ENCODE measurements at regions of chr5 and their contacts with region 1.

Region 1: DNA sequence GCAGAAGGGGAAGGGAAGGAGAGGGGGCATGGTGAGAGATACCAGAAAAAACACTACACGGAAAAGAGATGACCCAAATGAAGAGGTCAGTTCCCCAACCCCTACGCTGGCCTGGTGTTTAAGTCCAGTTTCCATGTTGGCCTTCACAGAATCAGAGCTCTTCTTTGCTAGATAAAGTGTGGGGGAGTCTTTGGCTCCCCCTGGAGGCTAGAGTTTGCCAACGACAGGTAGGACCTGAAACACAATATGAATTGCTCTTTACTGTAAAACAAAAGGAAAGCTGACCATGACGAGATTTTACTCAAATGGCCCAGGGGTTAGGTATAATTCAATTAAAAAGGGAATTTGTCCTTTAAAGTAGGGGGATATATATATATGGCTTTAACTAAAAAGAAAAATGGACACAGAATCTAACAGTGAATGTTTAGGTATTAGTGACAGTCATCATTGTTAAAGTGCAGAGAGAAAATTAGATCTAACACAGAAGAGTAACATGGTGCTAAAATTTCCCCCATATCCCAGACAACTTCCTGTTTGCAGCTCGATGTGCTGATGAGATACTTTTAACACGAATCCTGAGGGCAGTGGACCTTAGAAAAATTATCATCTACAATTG is 92.0 kb downstream of the SV2C start:
- DNase-seq: peak; percentile 80
- H3K4me3 ChIP-seq: peak overlapping the region in 1 of 2 experiments; percentile 6; a peak in 2 of 4 replicates
- H3K27ac ChIP-seq: peak overlapping the region in 1 of 2 experiments; percentile 85; a peak in 2 of 4 replicates
- H3K4me1 ChIP-seq: peaks cover 0 to 37% of the 10 kb centered on the region in 2 experiments; a peak in 2 of 4 replicates
- H3K27me3 ChIP-seq: no peaks in the 10 kb centered on the region
- CTCF ChIP-seq: peak; percentile 89
- EP300 ChIP-seq: no peak
- RAD21 ChIP-seq: peak; percentile 92

Region 2: DNA sequence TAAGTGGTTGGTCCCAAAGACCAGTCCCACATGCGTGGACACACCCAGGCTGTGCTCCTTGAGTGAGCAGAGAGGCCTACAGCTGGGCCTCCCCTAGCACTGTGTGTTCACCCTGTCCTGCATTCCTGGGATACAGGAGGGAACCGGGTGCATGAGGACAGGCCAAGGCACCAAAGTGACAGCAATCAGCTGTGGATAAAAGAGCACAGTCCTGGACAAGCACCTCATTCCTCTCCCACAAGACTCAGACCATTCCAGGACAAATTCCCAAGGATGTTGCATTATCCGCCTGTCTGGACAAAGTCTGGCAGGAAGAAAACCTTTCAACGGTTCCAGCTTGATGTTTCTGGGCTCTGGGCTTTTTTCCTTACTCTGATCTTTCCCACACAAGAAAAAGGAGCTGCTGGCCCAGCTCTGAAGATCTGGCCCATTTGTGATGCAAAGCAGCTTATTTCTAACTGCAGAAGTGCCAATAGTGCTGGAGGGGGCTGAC is 1807.9 kb before region 1 on chr5:
- CTCF ChIA-PET with region 1: no interaction called
- POLR2A ChIA-PET with region 1: no interaction called
- DNase-seq: no peak
- H3K4me3 ChIP-seq: no peak overlapping the region
- H3K27ac ChIP-seq: no peak overlapping the region
- H3K4me1 ChIP-seq: no peaks in the 10 kb centered on the region
- H3K27me3 ChIP-seq: no peaks in the 10 kb centered on the region
- CTCF ChIP-seq: no peak
- EP300 ChIP-seq: no peak
- RAD21 ChIP-seq: no peak

Region 3: DNA sequence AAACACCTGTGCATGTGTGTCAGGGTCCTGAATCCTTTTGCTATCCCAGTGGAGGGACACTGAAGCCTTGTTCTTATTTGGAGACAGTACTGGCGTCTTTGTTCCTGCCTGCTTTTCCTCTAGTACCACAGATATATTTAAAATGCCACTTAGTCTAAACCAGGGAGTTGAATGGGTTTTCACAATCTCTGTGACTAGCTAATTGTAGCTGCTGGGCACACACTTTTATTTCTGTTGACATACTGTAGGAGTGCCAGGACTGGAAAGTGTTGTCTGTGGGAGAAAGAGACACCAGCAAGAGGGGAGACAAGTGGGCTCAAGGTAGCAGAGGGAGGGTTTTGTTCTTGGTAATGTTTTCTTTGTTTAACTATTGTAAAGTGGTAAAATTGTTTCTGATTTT is 265.9 kb before region 1 on chr5:
- CTCF ChIA-PET with region 1: interaction called, 12 read pairs
- POLR2A ChIA-PET with region 1: no interaction called
- DNase-seq: peak; percentile 25
- H3K4me3 ChIP-seq: no peak overlapping the region
- H3K27ac ChIP-seq: peak overlapping the region in 1 of 2 experiments; percentile 86; a peak in 2 of 4 replicates
- H3K4me1 ChIP-seq: peaks cover 0 to 28% of the 10 kb centered on the region in 2 experiments; a peak in 2 of 4 replicates
- H3K27me3 ChIP-seq: no peaks in the 10 kb centered on the region
- CTCF ChIP-seq: no peak
- EP300 ChIP-seq: peak in 1 of 2 experiments; percentile 73; a peak in 2 of 4 replicates
- RAD21 ChIP-seq: no peak

Region 4: GRCh38 chr5:76114179-76114851 is 60.8 kb before region 1 on chr5:
- CTCF ChIA-PET with region 1: interaction called, 17 read pairs
- POLR2A ChIA-PET with region 1: no interaction called
- DNase-seq: peak; percentile 20
- H3K4me3 ChIP-seq: no peak overlapping the region
- H3K27ac ChIP-seq: peak overlapping the region in 1 of 2 experiments; percentile 84; a peak in 2 of 4 replicates
- H3K4me1 ChIP-seq: peaks cover 0 to 51% of the 10 kb centered on the region in 2 experiments; a peak in 2 of 4 replicates
- H3K27me3 ChIP-seq: no peaks in the 10 kb centered on the region
- CTCF ChIP-seq: no peak
- EP300 ChIP-seq: no peak; a peak in 1 of 4 replicates
- RAD21 ChIP-seq: no peak

Region 5: DNA sequence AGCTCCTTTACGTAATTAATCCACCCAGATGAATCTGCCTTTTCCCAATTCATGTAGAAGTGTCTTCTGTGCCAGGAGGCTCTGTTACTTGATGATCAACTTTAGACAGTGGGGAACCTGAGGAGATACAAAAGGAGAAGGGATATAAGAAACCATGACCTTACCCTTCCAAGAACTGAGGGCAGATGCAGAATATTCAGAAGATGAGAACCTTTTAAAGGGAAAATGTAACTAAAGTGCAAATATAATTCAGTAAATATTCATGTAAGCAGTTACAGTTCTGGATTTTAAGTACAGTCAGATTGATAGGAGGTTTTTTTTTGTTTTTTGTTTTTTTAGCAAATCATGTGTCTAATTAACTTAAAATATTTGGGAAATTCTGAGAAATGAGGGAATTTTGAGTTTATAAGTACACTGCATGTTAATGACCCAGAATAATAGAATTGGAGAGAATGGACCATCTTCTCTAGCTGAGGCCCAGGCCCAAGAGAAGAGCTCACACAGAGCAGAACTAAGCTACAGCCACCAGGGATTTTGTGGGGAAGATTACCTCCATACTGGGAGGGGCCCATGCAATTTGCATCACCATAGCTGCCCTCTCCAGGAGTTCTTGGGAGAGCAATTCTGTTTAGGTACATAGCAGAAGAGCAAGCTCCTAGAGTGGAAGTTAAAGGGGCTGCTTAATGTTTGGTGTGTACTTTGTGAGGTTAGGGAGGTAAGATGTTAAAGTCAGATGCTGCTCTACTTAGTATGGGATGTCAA is 30.5 kb before region 1 on chr5:
- CTCF ChIA-PET with region 1: interaction called, 21 read pairs
- POLR2A ChIA-PET with region 1: no interaction called
- DNase-seq: no peak
- H3K4me3 ChIP-seq: no peak overlapping the region
- H3K27ac ChIP-seq: no peak overlapping the region; a peak in 1 of 4 replicates
- H3K4me1 ChIP-seq: peaks cover 0 to 27% of the 10 kb centered on the region in 2 experiments; a peak in 2 of 4 replicates
- H3K27me3 ChIP-seq: no peaks in the 10 kb centered on the region
- CTCF ChIP-seq: no peak
- EP300 ChIP-seq: no peak
- RAD21 ChIP-seq: no peak

Region 6: GRCh38 chr5:76199336-76200318 is 24.5 kb after region 1 on chr5:
- CTCF ChIA-PET with region 1: interaction called, 15 read pairs
- POLR2A ChIA-PET with region 1: no interaction called
- DNase-seq: peak; percentile 21
- H3K4me3 ChIP-seq: no peak overlapping the region
- H3K27ac ChIP-seq: peak overlapping the region in 1 of 2 experiments; percentile 60; a peak in 1 of 4 replicates
- H3K4me1 ChIP-seq: peaks cover 0 to 19% of the 10 kb centered on the region in 2 experiments; a peak in 1 of 4 replicates
- H3K27me3 ChIP-seq: no peaks in the 10 kb centered on the region
- CTCF ChIP-seq: no peak
- EP300 ChIP-seq: no peak
- RAD21 ChIP-seq: no peak

Region 7: DNA sequence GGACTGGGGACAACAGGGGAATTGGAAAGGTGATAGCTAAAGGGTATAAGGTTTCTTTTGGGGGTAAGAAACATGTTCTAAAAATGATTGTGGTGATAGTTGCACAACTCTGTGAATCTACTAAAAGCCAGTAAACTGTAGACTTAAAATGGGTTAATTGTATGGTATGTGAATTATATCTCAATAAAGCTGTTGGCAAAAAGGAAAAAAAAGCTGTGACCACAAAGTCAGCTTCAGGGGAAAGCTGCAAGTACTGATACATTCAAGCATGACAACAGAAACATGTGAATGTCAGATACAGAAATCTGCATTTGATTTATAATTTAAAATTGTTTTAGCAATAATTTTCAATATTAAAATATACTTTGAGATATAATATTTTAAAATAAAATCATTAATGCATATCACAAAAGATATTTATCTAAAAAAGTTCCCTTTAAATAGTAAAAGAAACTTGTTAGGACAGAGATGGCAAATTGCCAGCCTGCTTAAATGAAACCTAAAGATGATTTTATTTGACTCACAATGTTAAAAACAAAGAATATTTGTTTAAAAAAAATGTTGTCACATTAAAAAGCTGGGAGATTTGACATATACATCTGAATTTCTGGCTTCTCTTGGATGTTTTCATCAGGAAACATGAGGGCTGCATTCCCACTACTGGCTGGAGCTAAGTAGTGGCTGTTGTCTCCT is 1535.0 kb after region 1 on chr5:
- CTCF ChIA-PET with region 1: no interaction called
- POLR2A ChIA-PET with region 1: no interaction called
- DNase-seq: no peak
- H3K4me3 ChIP-seq: no peak overlapping the region
- H3K27ac ChIP-seq: no peak overlapping the region
- H3K4me1 ChIP-seq: no peaks in the 10 kb centered on the region
- H3K27me3 ChIP-seq: no peaks in the 10 kb centered on the region
- CTCF ChIP-seq: no peak
- EP300 ChIP-seq: no peak
- RAD21 ChIP-seq: no peak

Measured in SK-N-SH (cell line).